ENCODE measurements at regions of chr4 and their contacts with region 1.

Region 1: DNA sequence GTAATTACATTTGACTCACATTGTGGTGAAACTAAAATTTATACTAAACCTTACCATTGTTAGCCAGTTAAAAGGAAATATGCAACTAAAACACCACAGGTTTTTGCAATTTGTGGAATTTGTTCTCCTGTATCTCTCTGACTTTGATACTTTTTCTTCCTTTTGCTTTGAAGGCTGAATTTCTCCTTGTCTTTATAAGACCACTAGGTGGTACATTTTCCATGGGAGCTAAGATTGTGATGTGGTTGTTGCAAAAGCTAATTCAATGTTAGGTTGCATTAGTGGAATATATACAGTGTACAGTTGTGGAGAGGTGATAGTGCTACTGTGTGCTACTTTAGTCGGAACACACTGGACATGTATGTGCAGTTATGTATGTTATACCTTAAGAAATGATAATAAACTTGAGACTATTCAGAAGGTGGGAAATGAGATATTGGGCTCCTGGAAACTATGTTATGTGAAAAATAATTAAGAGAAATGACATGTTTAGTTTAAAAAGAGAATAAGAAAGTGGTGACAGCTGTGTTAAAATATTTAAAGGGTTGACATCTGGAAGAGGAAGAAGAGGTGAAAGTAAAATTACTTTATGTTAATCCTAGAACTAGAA is 70.3 kb downstream of the ARL9 start:
- DNase-seq: peak in 3 of 14 experiments; percentile 33 to 39 (median 38)
- ATAC-seq: peak; percentile 48
- H3K4me3 ChIP-seq: no peak overlapping the region
- H3K4me3 Mint-ChIP-seq: no peak overlapping the region
- H3K27ac ChIP-seq: no peak overlapping the region
- H3K27ac Mint-ChIP-seq: no peak overlapping the region
- H3K4me1 ChIP-seq: no peaks in the 10 kb centered on the region
- H3K4me1 Mint-ChIP-seq: no peaks in the 10 kb centered on the region
- H3K27me3 ChIP-seq: peaks cover 0 to 4% of the 10 kb centered on the region in 2 experiments
- H3K27me3 Mint-ChIP-seq: no peaks in the 10 kb centered on the region
- CTCF ChIP-seq: peak; percentile 62

Region 2: GRCh38 chr4:56698329-56698728 is 122.4 kb after region 1 on chr4:
- CTCF ChIA-PET with region 1: no interaction called
- POLR2A ChIA-PET with region 1: no interaction called
- intact Hi-C with region 1: no loop called
- DNase-seq: no peak
- ATAC-seq: no peak
- H3K4me3 ChIP-seq: no peak overlapping the region
- H3K4me3 Mint-ChIP-seq: no peak overlapping the region
- H3K27ac ChIP-seq: no peak overlapping the region
- H3K27ac Mint-ChIP-seq: no peak overlapping the region
- H3K4me1 ChIP-seq: no peaks in the 10 kb centered on the region
- H3K4me1 Mint-ChIP-seq: peaks cover 30% of the 10 kb centered on the region
- H3K27me3 ChIP-seq: no peaks in the 10 kb centered on the region
- H3K27me3 Mint-ChIP-seq: no peaks in the 10 kb centered on the region
- CTCF ChIP-seq: no peak

Region 3: GRCh38 chr4:56828784-56829535 is 253.0 kb after region 1 on chr4:
- CTCF ChIA-PET with region 1: interaction called, 3 read pairs
- POLR2A ChIA-PET with region 1: no interaction called
- intact Hi-C with region 1: loop called in 1 of 2 experiments (anchors 10 kb)
- DNase-seq: no peak
- ATAC-seq: no peak
- H3K4me3 ChIP-seq: no peak overlapping the region
- H3K4me3 Mint-ChIP-seq: no peak overlapping the region
- H3K27ac ChIP-seq: no peak overlapping the region
- H3K27ac Mint-ChIP-seq: no peak overlapping the region
- H3K4me1 ChIP-seq: no peaks in the 10 kb centered on the region
- H3K4me1 Mint-ChIP-seq: no peaks in the 10 kb centered on the region
- H3K27me3 ChIP-seq: no peaks in the 10 kb centered on the region
- H3K27me3 Mint-ChIP-seq: no peaks in the 10 kb centered on the region
- CTCF ChIP-seq: no peak

Measured in CD4-positive, alpha-beta T cell (primary cell).